Mammary epithelial cell (primary cell): ENCODE measurements at regions of chr1 and their contacts with region 1.

Region 1: GRCh38 chr1:157034137-157034800 is 11.3 kb downstream of the ARHGEF11 start:
- DNase-seq: peak; percentile 13
- H3K4me3 ChIP-seq: no peak overlapping the region
- H3K27ac ChIP-seq: no peak overlapping the region
- H3K4me1 ChIP-seq: no peaks in the 10 kb centered on the region
- H3K27me3 ChIP-seq: no peaks in the 10 kb centered on the region
- CTCF ChIP-seq: no peak

Region 2: GRCh38 chr1:156948708-156949107 is 85.6 kb before region 1 on chr1:
- CTCF ChIA-PET with region 1: no interaction called
- dilution Hi-C with region 1: loop called (anchors 5 kb)
- in situ Hi-C with region 1: no loop called
- intact Hi-C with region 1: no loop called
- DNase-seq: no peak
- H3K4me3 ChIP-seq: no peak overlapping the region
- H3K27ac ChIP-seq: no peak overlapping the region
- H3K4me1 ChIP-seq: no peaks in the 10 kb centered on the region
- H3K27me3 ChIP-seq: no peaks in the 10 kb centered on the region
- CTCF ChIP-seq: peak; percentile 1 to 19